ENCODE measurements at regions of chr17 and their contacts with region 1.

Region 1: GRCh38 chr17:4733073-4733531 is 1.9 kb downstream of the MED11 start:
- DNase-seq: peak; percentile 40
- ATAC-seq: no peak
- H3K4me3 Mint-ChIP-seq: peak overlapping the region; percentile 95
- H3K27ac Mint-ChIP-seq: peak overlapping the region; percentile 63
- H3K4me1 Mint-ChIP-seq: peaks cover 39% of the 10 kb centered on the region
- H3K27me3 Mint-ChIP-seq: peaks cover 1% of the 10 kb centered on the region

Region 2: GRCh38 chr17:4709794-4710692 is 23.1 kb before region 1 on chr17 and contains the start of gene ARRB2:
- CTCF ChIA-PET with region 1: interaction called, 10 read pairs
- POLR2A ChIA-PET with region 1: interaction called, 8 read pairs
- DNase-seq: peak; percentile 100
- ATAC-seq: peak; percentile 87
- H3K4me3 Mint-ChIP-seq: peak within 1 kb of the TSS; percentile 94
- H3K27ac Mint-ChIP-seq: peak within 1 kb of the TSS; percentile 96
- H3K4me1 Mint-ChIP-seq: peaks cover 66% of the 10 kb centered on the region
- H3K27me3 Mint-ChIP-seq: no peaks in the 10 kb centered on the region
- total RNA-seq, gene ARRB2: 302 to 316 TPM

Region 3: DNA sequence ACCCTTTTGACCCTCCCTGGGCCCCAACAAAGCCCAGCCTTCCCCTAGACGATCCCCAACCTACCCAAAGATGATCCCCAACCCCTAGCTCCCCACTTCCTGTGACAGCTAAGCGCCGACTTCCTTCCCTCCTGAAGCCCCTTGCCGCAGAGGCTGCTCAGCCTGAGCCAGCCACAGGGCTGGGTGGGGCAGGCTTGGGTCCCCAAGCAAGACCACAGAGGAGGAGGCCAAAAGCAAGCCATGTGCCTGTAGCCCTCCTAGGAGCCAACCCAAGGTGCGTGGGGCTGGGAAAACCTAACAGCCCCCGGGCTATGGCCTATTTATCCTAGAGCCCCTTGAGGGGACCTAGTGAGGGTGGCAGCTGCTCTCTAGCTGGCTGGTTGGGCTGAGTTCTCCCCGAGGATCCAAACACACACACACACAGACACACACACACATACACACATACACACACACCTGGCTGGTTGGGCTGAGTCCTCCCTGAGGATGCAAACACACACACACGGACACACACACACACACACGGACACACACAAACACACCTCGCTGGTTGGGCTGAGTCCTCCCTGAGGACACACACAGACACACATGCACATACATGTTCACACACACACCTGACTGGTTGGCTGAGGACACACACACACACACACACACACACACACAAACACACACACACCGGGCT is 17.9 kb before region 1 on chr17:
- CTCF ChIA-PET with region 1: interaction called, 10 read pairs
- POLR2A ChIA-PET with region 1: interaction called, 8 read pairs
- DNase-seq: peak; percentile 81
- ATAC-seq: peak; percentile 11
- H3K4me3 Mint-ChIP-seq: peak overlapping the region; percentile 81
- H3K27ac Mint-ChIP-seq: peak overlapping the region; percentile 94
- H3K4me1 Mint-ChIP-seq: peaks cover 74% of the 10 kb centered on the region
- H3K27me3 Mint-ChIP-seq: no peaks in the 10 kb centered on the region

Measured in activated CD8-positive, alpha-beta T cell treated with anti-CD3 and anti-CD28 coated beads, Interleukin-2, amount 10 ng/mL, durations not matched to agents 7 days and 5 days (primary cell).